ENCODE measurements at regions of chr2 and their contacts with region 1.

Region 1: GRCh38 chr2:201231781-201232466 is 28.4 kb upstream of the CASP8 start:
- DNase-seq: peak; percentile 92
- H3K4me3 Mint-ChIP-seq: peak overlapping the region; percentile 97
- H3K27ac Mint-ChIP-seq: peak overlapping the region; percentile 97
- H3K4me1 Mint-ChIP-seq: peaks cover 58% of the 10 kb centered on the region
- H3K27me3 Mint-ChIP-seq: no peaks in the 10 kb centered on the region

Region 2: DNA sequence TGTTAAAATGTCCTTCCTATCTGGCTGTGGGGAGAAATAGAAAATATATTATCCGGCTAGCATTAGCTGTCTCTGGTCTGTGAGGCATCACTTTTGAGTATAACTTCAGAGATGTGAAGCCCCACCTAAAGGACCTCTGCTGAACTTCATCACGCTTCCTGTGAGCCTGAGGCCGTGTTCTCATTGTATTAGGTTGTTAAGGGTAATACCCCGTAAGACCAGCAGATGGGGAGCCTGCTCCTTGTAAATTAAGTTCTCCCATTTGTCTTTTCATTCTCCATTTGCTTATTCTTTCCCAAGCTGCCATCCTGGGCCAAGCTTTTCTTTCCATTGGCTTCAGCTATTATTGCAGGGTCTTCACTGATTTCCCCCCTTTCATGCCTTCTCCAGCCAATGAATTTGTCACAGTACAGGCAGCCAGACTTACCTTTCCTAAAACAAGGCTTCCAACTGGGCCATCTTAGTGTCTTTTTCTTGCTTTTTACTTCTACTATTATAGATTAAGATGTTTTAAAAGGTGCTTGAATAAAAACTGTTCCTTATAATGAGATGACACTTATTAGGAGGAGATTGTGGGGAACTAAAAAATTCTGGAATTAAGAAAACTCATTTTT is 330.4 kb before region 1 on chr2:
- CTCF ChIA-PET with region 1: interaction called, 39 read pairs
- POLR2A ChIA-PET with region 1: interaction called, 4 read pairs
- DNase-seq: peak; percentile 81
- H3K4me3 Mint-ChIP-seq: no peak overlapping the region
- H3K27ac Mint-ChIP-seq: peak overlapping the region; percentile 53
- H3K4me1 Mint-ChIP-seq: peaks cover 32% of the 10 kb centered on the region
- H3K27me3 Mint-ChIP-seq: no peaks in the 10 kb centered on the region

Region 3: DNA sequence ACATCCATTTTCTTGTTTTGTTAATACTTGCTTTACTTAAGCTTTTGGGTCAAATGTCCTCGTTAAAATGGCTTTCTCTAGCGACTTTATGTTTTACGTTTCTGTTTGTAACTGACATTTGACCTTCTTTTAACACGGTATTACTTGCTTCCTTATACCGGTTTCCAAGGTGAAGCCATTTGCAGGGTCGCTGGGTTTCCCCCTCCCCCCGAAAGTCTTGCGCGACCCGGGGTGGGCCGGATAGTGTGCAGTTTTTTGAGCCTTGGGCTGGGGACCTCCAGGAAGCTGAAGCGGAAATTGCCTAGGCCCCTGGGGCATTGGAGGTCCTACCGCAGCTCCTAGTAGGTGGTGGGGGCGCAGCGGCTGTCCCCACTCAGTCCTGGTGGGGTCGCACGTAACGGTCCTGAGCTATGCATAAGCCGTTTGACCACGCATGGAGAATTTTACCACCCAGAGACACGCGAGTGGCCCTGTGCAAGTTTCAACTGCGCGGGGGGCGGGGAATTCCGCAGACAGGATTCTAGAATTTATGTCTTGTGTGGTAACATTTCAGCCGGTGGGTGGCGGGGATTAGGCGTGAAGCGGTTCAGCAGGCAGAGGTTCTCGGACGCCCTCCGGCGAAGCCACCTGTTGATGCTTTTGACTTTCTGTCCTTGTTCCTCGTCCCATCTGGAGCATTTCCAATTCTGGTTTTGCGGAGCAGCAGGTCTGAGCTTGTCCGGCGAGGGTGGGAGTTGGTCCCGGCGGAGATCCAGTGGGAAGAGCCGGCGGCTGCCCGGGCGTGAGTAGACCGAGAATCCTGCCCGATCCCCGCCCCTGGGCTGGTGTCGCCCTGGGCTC is 113.6 kb before region 1 on chr2:
- CTCF ChIA-PET with region 1: interaction called, 43 read pairs
- POLR2A ChIA-PET with region 1: interaction called, 55 read pairs
- DNase-seq: peak; percentile 90
- H3K4me3 Mint-ChIP-seq: peak overlapping the region; percentile 96
- H3K27ac Mint-ChIP-seq: peak overlapping the region; percentile 98
- H3K4me1 Mint-ChIP-seq: peaks cover 50% of the 10 kb centered on the region
- H3K27me3 Mint-ChIP-seq: no peaks in the 10 kb centered on the region

Region 4: GRCh38 chr2:201182650-201183364 is 49.1 kb before region 1 on chr2 and contains the start of gene CASP10:
- CTCF ChIA-PET with region 1: interaction called, 317 read pairs
- POLR2A ChIA-PET with region 1: interaction called, 160 read pairs
- DNase-seq: no peak
- H3K4me3 Mint-ChIP-seq: peak within 1 kb of the TSS; percentile 98
- H3K27ac Mint-ChIP-seq: peak within 1 kb of the TSS; percentile 84
- H3K4me1 Mint-ChIP-seq: peaks cover 57% of the 10 kb centered on the region
- H3K27me3 Mint-ChIP-seq: no peaks in the 10 kb centered on the region
- total RNA-seq, gene CASP10: 47.8 to 51.3 TPM

Region 5: GRCh38 chr2:201220102-201220570 is 11.8 kb before region 1 on chr2:
- CTCF ChIA-PET with region 1: interaction called, 33 read pairs
- POLR2A ChIA-PET with region 1: interaction called, 25 read pairs
- DNase-seq: no peak
- H3K4me3 Mint-ChIP-seq: no peak overlapping the region
- H3K27ac Mint-ChIP-seq: no peak overlapping the region
- H3K4me1 Mint-ChIP-seq: peaks cover 60% of the 10 kb centered on the region
- H3K27me3 Mint-ChIP-seq: no peaks in the 10 kb centered on the region

Region 6: GRCh38 chr2:201363857-201364560 is 132.1 kb after region 1 on chr2:
- CTCF ChIA-PET with region 1: interaction called, 43 read pairs
- POLR2A ChIA-PET with region 1: interaction called, 9 read pairs
- DNase-seq: peak; percentile 21
- H3K4me3 Mint-ChIP-seq: no peak overlapping the region
- H3K27ac Mint-ChIP-seq: peak overlapping the region; percentile 71
- H3K4me1 Mint-ChIP-seq: peaks cover 32% of the 10 kb centered on the region
- H3K27me3 Mint-ChIP-seq: no peaks in the 10 kb centered on the region

Region 7: DNA sequence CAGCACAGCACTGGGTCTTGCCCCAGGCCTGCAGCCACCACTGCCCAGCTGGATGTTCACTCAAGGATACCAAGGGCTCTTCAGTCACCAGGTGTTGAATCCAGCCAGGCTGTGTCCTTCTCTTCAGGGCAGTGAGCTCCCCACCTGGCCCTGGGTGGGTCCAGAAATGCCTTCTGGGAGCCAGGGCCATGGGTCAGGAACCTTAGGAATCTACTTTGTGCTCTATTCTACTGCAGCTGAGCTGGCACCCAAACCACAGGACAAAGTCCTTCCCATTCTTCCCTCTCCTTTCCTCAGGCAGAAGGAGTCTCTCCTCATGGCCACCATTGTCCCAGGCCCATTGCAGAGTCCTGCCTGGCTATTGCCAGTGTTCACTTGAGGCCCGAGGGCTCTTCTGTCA is 232.6 kb after region 1 on chr2:
- CTCF ChIA-PET with region 1: no interaction called
- POLR2A ChIA-PET with region 1: no interaction called
- DNase-seq: no peak
- H3K4me3 Mint-ChIP-seq: no peak overlapping the region
- H3K27ac Mint-ChIP-seq: no peak overlapping the region
- H3K4me1 Mint-ChIP-seq: peaks cover 6% of the 10 kb centered on the region
- H3K27me3 Mint-ChIP-seq: no peaks in the 10 kb centered on the region

Region 8: GRCh38 chr2:202178342-202178958 is 946.5 kb after region 1 on chr2:
- CTCF ChIA-PET with region 1: interaction called, 10 read pairs
- POLR2A ChIA-PET with region 1: no interaction called
- DNase-seq: peak; percentile 52
- H3K4me3 Mint-ChIP-seq: no peak overlapping the region
- H3K27ac Mint-ChIP-seq: no peak overlapping the region
- H3K4me1 Mint-ChIP-seq: no peaks in the 10 kb centered on the region
- H3K27me3 Mint-ChIP-seq: peaks cover 4% of the 10 kb centered on the region

Measured in activated CD4-positive, alpha-beta memory T cell treated with anti-CD3 and anti-CD28 coated beads, Interleukin-2, amount 10 ng/mL, durations not matched to agents 7 days and 5 days (primary cell).